Naive thymus-derived CD8-positive, alpha-beta T cell (primary cell): ENCODE measurements at regions of chr2 and their contacts with region 1.

Region 1: GRCh38 chr2:169694113-169694903 is at the starts of genes CFAP210 and PHOSPHO2:
- DNase-seq: peak; percentile 94 to 100 (median 99)
- ATAC-seq: peak; percentile 88 to 94
- H3K4me3 Mint-ChIP-seq: peak within 1 kb of the TSS; percentile 83 to 97 (median 91)
- H3K27ac Mint-ChIP-seq: peak within 1 kb of the TSS; percentile 91 to 100 (median 99)
- H3K4me1 Mint-ChIP-seq: peaks cover 7 to 24% (median 22%) of the 10 kb centered on the region in 4 donors
- H3K27me3 Mint-ChIP-seq: peaks cover 0 to 16% (median 2%) of the 10 kb centered on the region in 5 donors
- polyA plus RNA-seq, gene CFAP210: not detected
- polyA plus RNA-seq, gene PHOSPHO2: 5.5 to 8.8 (median 6.3) TPM

Region 2: DNA sequence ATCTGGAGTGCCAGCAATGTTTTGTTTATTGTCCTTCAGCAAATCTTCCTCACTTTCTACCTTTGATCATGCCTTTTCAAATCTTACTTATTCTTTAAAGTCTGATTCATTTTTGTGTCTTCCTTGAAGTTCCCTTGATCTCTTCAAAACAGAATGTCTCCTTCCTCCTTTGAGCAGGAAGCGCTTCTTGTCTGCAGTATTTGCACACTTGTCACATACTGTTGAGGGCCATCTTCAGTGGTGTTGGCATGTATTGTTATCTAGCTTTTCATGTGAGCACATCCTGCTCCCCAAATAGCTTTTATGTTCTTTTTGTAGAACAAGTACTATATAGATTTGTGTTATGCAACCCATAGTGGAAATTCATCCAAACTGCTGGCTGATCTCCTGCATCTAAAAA is 1244.1 kb before region 1 on chr2:
- POLR2A ChIA-PET with region 1: interaction called, 12 read pairs
- DNase-seq: peak in 4 of 10 donors; percentile 27 to 62 (median 45)
- ATAC-seq: peak; percentile 89 to 90
- H3K4me3 Mint-ChIP-seq: peak overlapping the region; percentile 0 to 67 (median 38)
- H3K27ac Mint-ChIP-seq: peak overlapping the region; percentile 8 to 91 (median 74)
- H3K4me1 Mint-ChIP-seq: peaks cover 23 to 48% (median 39%) of the 10 kb centered on the region in 4 donors
- H3K27me3 Mint-ChIP-seq: no peaks in the 10 kb centered on the region

Region 3: GRCh38 chr2:169705927-169706326 is 11.6 kb after region 1 on chr2:
- POLR2A ChIA-PET with region 1: no interaction called
- DNase-seq: no peak
- ATAC-seq: no peak
- H3K4me3 Mint-ChIP-seq: no peak overlapping the region
- H3K27ac Mint-ChIP-seq: no peak overlapping the region
- H3K4me1 Mint-ChIP-seq: peaks cover 0 to 2% (median 0%) of the 10 kb centered on the region in 4 donors
- H3K27me3 Mint-ChIP-seq: no peaks in the 10 kb centered on the region